ENCODE measurements at regions of chr6 and their contacts with region 1.

Region 1: GRCh38 chr6:17987576-17988421 is at the start of gene KIF13A:
- DNase-seq: peak; percentile 70
- ATAC-seq: peak; percentile 66
- H3K4me3 Mint-ChIP-seq: peak within 1 kb of the TSS; percentile 70
- H3K27ac Mint-ChIP-seq: no peak within 1 kb of the TSS
- H3K4me1 Mint-ChIP-seq: peaks cover 9% of the 10 kb centered on the region
- H3K27me3 Mint-ChIP-seq: peaks cover 57% of the 10 kb centered on the region
- total RNA-seq, gene KIF13A: 0.07 TPM in 1 of 2 experiments, not detected in the other

Region 2: DNA sequence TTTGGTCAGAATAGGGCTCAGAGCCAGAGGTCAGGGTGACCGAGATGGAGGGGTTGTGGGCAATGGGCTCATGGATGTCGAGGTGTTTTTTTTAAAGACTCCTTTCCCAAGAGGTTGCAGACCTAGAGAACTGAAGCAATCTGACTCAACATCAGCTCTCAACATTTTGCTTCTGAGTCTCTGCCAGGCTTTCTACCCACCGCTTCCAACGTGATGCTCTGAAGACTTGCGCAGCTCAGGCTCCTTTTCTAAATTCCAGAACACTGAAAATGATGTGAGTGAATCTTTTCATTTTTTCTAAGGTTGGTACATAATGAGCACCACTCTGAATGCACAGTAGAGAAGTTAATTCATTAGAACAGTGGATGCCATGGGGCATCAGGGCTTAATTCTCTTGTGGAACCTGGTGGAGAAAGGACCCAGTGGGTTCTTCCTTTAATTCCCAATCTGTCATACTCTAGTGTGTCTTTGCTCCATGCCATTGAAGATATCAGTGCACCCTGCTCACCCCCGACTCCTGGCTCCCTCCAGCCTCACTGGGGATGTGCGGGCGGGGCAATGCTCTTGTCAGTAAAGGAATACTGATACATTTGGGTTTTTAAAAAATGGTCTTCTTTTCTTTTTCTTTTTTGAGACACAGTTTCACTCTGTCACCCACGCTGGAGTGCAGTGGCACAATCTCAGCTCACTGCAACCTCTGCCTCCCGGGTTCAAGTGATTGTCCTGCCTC is 16.6 kb after region 1 on chr6:
- CTCF ChIA-PET with region 1: no interaction called
- POLR2A ChIA-PET with region 1: no interaction called
- intact Hi-C with region 1: no loop called
- DNase-seq: no peak
- ATAC-seq: no peak
- H3K4me3 Mint-ChIP-seq: no peak overlapping the region
- H3K27ac Mint-ChIP-seq: no peak overlapping the region
- H3K4me1 Mint-ChIP-seq: no peaks in the 10 kb centered on the region
- H3K27me3 Mint-ChIP-seq: peaks cover 11% of the 10 kb centered on the region

Region 3: DNA sequence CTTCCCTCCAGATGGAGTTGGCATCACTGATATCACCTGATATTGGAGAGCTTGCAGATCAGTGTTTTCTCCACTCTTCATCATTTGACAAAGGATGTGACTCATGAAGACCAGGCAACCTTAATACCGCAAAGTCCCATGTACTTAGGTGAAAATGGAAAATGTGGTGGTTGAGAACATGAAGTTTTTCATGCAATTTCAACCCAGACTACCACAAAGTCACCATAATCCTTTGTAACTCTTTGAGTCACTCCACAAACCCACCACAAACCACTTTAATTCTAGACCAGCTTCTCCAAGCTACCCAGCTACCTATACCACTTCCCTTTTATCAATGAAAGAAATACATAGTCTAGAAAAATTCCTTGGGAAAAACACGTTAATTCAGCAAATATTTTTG is 127.6 kb after region 1 on chr6:
- CTCF ChIA-PET with region 1: no interaction called
- POLR2A ChIA-PET with region 1: no interaction called
- intact Hi-C with region 1: loop called (anchors 2 to 10 kb)
- DNase-seq: peak; percentile 8
- ATAC-seq: peak; percentile 87
- H3K4me3 Mint-ChIP-seq: no peak overlapping the region
- H3K27ac Mint-ChIP-seq: no peak overlapping the region
- H3K4me1 Mint-ChIP-seq: peaks cover 12% of the 10 kb centered on the region
- H3K27me3 Mint-ChIP-seq: peaks cover 51% of the 10 kb centered on the region

Region 4: DNA sequence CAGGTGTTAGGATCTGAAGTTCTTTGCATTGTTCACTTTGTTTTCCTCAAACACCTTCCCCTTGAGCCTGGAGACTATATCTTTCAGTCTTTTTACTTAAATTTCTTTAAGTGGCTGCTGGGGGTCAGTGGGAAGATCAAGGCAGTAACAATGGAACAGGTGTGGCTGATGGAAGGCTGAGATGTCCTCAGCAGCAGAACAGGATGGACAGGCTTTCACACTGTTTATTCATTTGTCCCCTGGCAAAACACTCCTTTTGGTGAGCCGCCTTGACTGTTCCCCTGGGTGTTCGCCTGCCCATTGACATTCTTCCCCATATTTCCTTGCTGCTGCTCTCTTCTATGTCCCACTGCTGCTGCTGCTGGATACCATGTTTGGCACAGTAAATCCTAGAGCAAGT is 437.4 kb after region 1 on chr6:
- CTCF ChIA-PET with region 1: no interaction called
- POLR2A ChIA-PET with region 1: no interaction called
- intact Hi-C with region 1: no loop called
- DNase-seq: no peak
- ATAC-seq: no peak
- H3K4me3 Mint-ChIP-seq: no peak overlapping the region
- H3K27ac Mint-ChIP-seq: no peak overlapping the region
- H3K4me1 Mint-ChIP-seq: peaks cover 14% of the 10 kb centered on the region
- H3K27me3 Mint-ChIP-seq: no peaks in the 10 kb centered on the region

Measured in activated CD4-positive, alpha-beta T cell treated with anti-CD3 and anti-CD28 coated beads for 36 hours (primary cell).